Activated CD8-positive, alpha-beta T cell treated with anti-CD3 and anti-CD28 coated beads for 36 hours (primary cell): ENCODE measurements at regions of chr6 and their contacts with region 1.

Region 1: DNA sequence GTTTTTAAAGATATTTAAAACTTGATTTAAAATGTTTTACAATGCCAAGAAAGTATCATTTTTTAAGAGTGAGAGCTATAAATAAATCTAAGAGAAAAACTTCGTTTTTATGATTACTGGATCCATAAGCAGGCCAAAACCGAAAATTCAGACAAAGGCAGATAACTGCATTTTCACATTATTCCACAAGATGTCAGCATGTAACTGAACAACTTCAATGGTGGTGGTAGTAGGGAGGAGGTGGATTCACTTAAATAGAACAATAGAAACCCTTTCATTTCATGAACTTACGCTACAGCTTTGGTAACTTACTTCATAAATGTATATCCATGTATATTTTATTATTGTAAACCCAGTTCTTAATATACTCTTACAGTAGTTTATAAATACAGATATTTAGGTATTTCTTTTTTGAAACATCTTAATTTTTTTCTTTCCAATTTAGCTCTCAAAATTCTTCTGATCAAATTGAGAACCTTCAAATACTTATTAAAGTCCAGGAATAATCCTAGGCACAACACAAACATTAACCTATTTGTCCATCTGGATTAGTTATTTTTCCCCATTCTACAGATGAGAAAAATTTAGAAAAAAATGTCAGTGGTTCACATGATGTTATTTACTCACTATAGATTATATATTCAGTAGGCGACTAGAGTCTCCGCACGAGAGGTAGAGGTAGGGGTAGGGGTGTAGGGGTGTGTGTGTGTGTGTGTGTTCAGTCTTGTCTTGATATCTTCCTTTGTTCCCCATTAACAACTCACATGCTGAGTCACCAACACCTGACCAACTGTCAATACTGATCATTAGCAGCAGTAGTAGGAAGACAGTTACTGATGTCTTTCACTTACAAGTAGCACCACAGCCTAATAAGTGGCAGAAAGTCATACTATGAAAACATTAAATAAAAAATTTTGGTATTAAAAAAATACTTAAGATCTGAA is 111.5 kb downstream of the ARHGAP18 start:
- DNase-seq: no peak
- ATAC-seq: peak; percentile 84
- H3K4me3 Mint-ChIP-seq: no peak overlapping the region
- H3K27ac Mint-ChIP-seq: no peak overlapping the region
- H3K4me1 Mint-ChIP-seq: peaks cover 2% of the 10 kb centered on the region
- H3K27me3 Mint-ChIP-seq: no peaks in the 10 kb centered on the region
- CTCF ChIP-seq: peak; percentile 80

Region 2: DNA sequence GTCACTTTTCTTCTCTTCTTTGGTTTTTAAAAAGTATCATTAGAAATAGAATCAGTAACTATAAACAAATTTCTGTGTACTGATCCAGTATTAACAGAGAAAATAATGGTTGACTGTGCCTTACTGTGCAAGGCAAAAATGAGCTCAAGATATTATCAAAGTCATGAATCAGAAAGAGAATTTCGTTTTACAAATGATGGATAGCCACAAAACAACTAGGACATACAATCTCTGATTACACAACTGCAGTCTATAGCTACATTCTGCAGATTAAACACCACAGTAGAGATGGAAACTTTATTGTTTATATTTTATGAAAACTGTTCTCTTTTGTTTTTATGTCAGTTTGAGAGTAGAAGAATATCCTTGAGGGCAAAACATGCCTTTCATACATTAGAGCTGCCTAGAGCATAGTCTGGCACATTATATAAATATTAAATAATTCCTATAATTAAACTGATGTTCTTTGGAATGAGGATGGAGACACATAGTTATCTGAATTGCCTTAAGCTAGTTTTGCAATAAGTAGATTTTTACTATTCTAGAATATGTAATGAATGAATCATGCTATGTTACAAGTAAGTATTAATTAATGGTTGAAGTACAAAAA is 382.5 kb before region 1 on chr6:
- CTCF ChIA-PET with region 1: no interaction called
- POLR2A ChIA-PET with region 1: no interaction called
- intact Hi-C with region 1: no loop called
- DNase-seq: no peak
- ATAC-seq: no peak
- H3K4me3 Mint-ChIP-seq: no peak overlapping the region
- H3K27ac Mint-ChIP-seq: no peak overlapping the region
- H3K4me1 Mint-ChIP-seq: no peaks in the 10 kb centered on the region
- H3K27me3 Mint-ChIP-seq: no peaks in the 10 kb centered on the region
- CTCF ChIP-seq: no peak

Region 3: GRCh38 chr6:129469070-129469662 is 129.3 kb before region 1 on chr6:
- CTCF ChIA-PET with region 1: no interaction called
- POLR2A ChIA-PET with region 1: no interaction called
- intact Hi-C with region 1: no loop called
- DNase-seq: no peak
- ATAC-seq: no peak
- H3K4me3 Mint-ChIP-seq: no peak overlapping the region
- H3K27ac Mint-ChIP-seq: no peak overlapping the region
- H3K4me1 Mint-ChIP-seq: peaks cover 6% of the 10 kb centered on the region
- H3K27me3 Mint-ChIP-seq: no peaks in the 10 kb centered on the region
- CTCF ChIP-seq: no peak

Region 4: DNA sequence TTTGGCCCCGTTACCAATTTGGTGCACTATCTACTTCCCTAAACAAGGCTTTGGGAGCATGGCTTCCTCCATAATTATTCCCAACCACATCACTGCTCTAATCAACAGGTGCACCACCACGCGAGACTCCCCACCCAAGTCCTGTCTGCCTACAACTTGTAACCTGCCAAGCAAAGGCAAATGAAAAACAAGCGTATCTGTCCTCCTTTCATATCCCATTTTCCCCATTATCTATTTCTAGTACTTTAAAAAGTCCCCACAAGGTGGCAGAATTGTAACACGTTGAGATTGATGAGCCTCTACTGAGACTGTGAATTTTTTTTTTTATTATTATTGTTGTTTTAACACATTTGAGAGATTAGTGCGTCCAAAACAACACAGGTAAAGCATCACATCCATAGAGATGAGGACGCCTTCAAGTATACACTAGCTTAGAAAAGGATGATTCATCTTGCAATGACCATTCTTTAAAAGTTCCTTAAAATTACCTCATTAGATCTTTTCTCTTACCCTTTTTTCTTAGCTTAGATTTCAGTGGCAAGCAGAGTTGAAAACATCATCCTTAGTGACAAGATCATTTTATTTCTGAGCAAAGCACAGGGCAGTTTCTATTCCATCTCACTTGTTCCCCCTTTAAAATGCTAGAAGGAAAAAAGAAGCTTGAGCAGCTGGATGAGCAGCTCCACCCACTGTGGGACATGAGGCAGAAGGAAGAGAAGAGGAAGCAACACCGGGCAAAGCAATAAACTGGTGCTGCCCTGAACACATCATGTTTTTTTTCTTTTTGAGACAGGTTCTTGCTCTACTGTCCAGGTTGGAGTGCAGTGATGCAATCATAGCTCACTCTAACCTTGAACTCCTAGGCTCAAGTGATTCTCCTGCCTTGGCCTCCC is 99.3 kb before region 1 on chr6:
- CTCF ChIA-PET with region 1: interaction called, 16 read pairs
- POLR2A ChIA-PET with region 1: no interaction called
- intact Hi-C with region 1: no loop called
- DNase-seq: no peak
- ATAC-seq: peak; percentile 65
- H3K4me3 Mint-ChIP-seq: peak overlapping the region; percentile 46
- H3K27ac Mint-ChIP-seq: peak overlapping the region; percentile 85
- H3K4me1 Mint-ChIP-seq: peaks cover 58% of the 10 kb centered on the region
- H3K27me3 Mint-ChIP-seq: no peaks in the 10 kb centered on the region
- CTCF ChIP-seq: peak; percentile 76

Region 5: GRCh38 chr6:129672881-129673643 is 74.5 kb after region 1 on chr6:
- CTCF ChIA-PET with region 1: interaction called, 15 read pairs
- POLR2A ChIA-PET with region 1: no interaction called
- intact Hi-C with region 1: no loop called
- DNase-seq: peak; percentile 49
- ATAC-seq: peak; percentile 63
- H3K4me3 Mint-ChIP-seq: peak overlapping the region; percentile 59
- H3K27ac Mint-ChIP-seq: peak overlapping the region; percentile 94
- H3K4me1 Mint-ChIP-seq: peaks cover 47% of the 10 kb centered on the region
- H3K27me3 Mint-ChIP-seq: no peaks in the 10 kb centered on the region
- CTCF ChIP-seq: no peak

Region 6: GRCh38 chr6:129730477-129731165 is 132.1 kb after region 1 on chr6:
- CTCF ChIA-PET with region 1: interaction called, 204 read pairs
- POLR2A ChIA-PET with region 1: interaction called, 3 read pairs
- intact Hi-C with region 1: loop called (anchors 1 kb)
- DNase-seq: peak; percentile 44
- ATAC-seq: peak; percentile 65
- H3K4me3 Mint-ChIP-seq: no peak overlapping the region
- H3K27ac Mint-ChIP-seq: peak overlapping the region; percentile 40
- H3K4me1 Mint-ChIP-seq: peaks cover 15% of the 10 kb centered on the region
- H3K27me3 Mint-ChIP-seq: no peaks in the 10 kb centered on the region
- CTCF ChIP-seq: peak; percentile 83

Region 7: GRCh38 chr6:129748212-129748900 is 149.8 kb after region 1 on chr6:
- CTCF ChIA-PET with region 1: interaction called, 10 read pairs
- POLR2A ChIA-PET with region 1: no interaction called
- intact Hi-C with region 1: no loop called
- DNase-seq: peak; percentile 78
- ATAC-seq: peak; percentile 90
- H3K4me3 Mint-ChIP-seq: peak overlapping the region; percentile 75
- H3K27ac Mint-ChIP-seq: peak overlapping the region; percentile 94
- H3K4me1 Mint-ChIP-seq: peaks cover 69% of the 10 kb centered on the region
- H3K27me3 Mint-ChIP-seq: no peaks in the 10 kb centered on the region
- CTCF ChIP-seq: no peak

Region 8: GRCh38 chr6:129774697-129775447 is 176.4 kb after region 1 on chr6:
- CTCF ChIA-PET with region 1: interaction called, 22 read pairs
- POLR2A ChIA-PET with region 1: no interaction called
- intact Hi-C with region 1: no loop called
- DNase-seq: peak; percentile 61
- ATAC-seq: peak; percentile 49
- H3K4me3 Mint-ChIP-seq: no peak overlapping the region
- H3K27ac Mint-ChIP-seq: no peak overlapping the region
- H3K4me1 Mint-ChIP-seq: no peaks in the 10 kb centered on the region
- H3K27me3 Mint-ChIP-seq: peaks cover 3% of the 10 kb centered on the region
- CTCF ChIP-seq: peak; percentile 96